Heart left ventricle (tissue), 16 donors: ENCODE measurements at regions of chr2 and their contacts with region 1.

Region 1: DNA sequence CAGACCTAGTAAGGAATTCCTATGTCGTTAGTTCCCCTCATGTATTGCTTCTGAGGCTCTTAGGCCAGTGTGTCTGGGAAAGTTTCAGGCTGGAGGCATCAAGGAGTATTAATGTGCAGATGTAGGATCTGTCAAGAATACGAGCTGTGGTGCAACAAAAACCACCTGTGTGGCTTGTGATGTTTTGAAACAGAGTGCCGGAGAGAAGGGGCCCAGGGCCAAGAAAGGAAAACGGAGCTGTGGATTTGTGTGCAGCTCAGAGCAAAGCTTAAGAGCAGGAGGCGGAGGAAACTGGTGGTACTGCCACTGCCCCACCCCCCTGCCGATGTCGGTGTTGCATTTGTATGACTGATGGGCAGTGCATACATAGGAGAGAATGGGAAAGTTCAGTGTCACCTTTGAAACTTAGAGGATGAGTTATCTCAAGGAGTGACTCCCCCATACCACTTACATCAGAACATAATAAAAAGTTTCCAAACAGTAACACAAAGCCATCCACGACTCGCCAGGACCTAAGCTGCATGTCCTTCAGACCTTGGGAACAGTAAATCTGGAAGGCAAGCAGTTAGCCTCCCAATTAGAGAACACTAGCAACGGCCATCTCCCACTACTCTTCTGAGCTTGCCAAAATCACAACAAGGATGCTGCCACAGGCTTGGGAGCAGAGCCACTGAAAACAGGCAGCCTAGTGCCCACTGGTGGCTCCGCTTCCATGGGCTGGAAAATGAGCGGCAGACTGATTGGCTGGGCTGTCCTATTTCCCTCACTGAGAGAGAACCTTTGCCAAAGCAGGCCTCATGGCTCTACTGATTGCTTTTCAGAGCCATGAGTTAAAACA is 152.7 kb upstream of the NT5C1B start:
- DNase-seq: peak; percentile 24 to 61 (median 57)
- ATAC-seq: peak; percentile 57 to 78 (median 74)
- H3K4me3 ChIP-seq: no peak overlapping the region
- H3K27ac ChIP-seq: peak overlapping the region in 6 of 12 donors; percentile 0 to 54 (median 34)
- H3K4me1 ChIP-seq: peaks cover 0 to 29% (median 3%) of the 10 kb centered on the region in 12 donors
- H3K27me3 ChIP-seq: no peaks in the 10 kb centered on the region
- CTCF ChIP-seq: peak in 8 of 12 donors; percentile 7 to 48 (median 37)
- POLR2A ChIP-seq: no peak

Region 2: GRCh38 chr2:18435421-18436037 is 306.6 kb before region 1 on chr2:
- intact Hi-C with region 1: loop called in 6 of 10 experiments (anchors 5 to 10 kb)
- DNase-seq: no peak
- ATAC-seq: peak in 2 of 4 donors; percentile 37 to 38
- H3K4me3 ChIP-seq: no peak overlapping the region
- H3K27ac ChIP-seq: no peak overlapping the region
- H3K4me1 ChIP-seq: peaks cover 0 to 16% (median 0%) of the 10 kb centered on the region in 12 donors
- H3K27me3 ChIP-seq: no peaks in the 10 kb centered on the region
- CTCF ChIP-seq: peak in 11 of 12 donors; percentile 38 to 71 (median 57)
- POLR2A ChIP-seq: no peak